PC-9 (cell line): ENCODE measurements at regions of chr14 and their contacts with region 1.

Region 1: GRCh38 chr14:104729835-104730181 is 5.8 kb downstream of the ADSS1 start:
- DNase-seq: no peak
- H3K4me3 ChIP-seq: no peak overlapping the region
- H3K27ac ChIP-seq: no peak overlapping the region
- H3K4me1 ChIP-seq: peaks cover 3% of the 10 kb centered on the region; the same call in 1 of the 2 replicates
- H3K27me3 ChIP-seq: no peaks in the 10 kb centered on the region
- CTCF ChIP-seq: no peak

Region 2: GRCh38 chr14:103928011-103928890 is 801.6 kb before region 1 on chr14 and contains the start of gene TDRD9:
- CTCF ChIA-PET with region 1: interaction called, 10 read pairs
- POLR2A ChIA-PET with region 1: no interaction called
- intact Hi-C with region 1: no loop called
- DNase-seq: no peak
- H3K4me3 ChIP-seq: no peak within 1 kb of the TSS
- H3K27ac ChIP-seq: no peak within 1 kb of the TSS
- H3K4me1 ChIP-seq: peaks cover 17% of the 10 kb centered on the region
- H3K27me3 ChIP-seq: no peaks in the 10 kb centered on the region
- CTCF ChIP-seq: no peak
- total RNA-seq, gene TDRD9: 0.15 TPM in 1 of 2 replicates, not detected in the other